AG04449 (cell line): ENCODE measurements at regions of chr10 and their contacts with region 1.

Region 1: GRCh38 chr10:70093335-70093944 is 39.2 kb downstream of the AIFM2 start:
- DNase-seq: no peak
- H3K4me3 ChIP-seq: no peak overlapping the region
- CTCF ChIP-seq: no peak

Region 2: GRCh38 chr10:69716711-69717560 is 376.5 kb before region 1 on chr10:
- CTCF ChIA-PET with region 1: no interaction called
- POLR2A ChIA-PET with region 1: no interaction called
- DNase-seq: no peak
- H3K4me3 ChIP-seq: no peak overlapping the region
- CTCF ChIP-seq: peak; percentile 72

Region 3: GRCh38 chr10:70106958-70107791 is 13.7 kb after region 1 on chr10:
- CTCF ChIA-PET with region 1: interaction called, 36 read pairs
- POLR2A ChIA-PET with region 1: no interaction called
- DNase-seq: no peak
- H3K4me3 ChIP-seq: no peak overlapping the region
- CTCF ChIP-seq: peak; percentile 53